HEK293T (cell line): ENCODE measurements at regions of chr2 and their contacts with region 1.

Region 1: DNA sequence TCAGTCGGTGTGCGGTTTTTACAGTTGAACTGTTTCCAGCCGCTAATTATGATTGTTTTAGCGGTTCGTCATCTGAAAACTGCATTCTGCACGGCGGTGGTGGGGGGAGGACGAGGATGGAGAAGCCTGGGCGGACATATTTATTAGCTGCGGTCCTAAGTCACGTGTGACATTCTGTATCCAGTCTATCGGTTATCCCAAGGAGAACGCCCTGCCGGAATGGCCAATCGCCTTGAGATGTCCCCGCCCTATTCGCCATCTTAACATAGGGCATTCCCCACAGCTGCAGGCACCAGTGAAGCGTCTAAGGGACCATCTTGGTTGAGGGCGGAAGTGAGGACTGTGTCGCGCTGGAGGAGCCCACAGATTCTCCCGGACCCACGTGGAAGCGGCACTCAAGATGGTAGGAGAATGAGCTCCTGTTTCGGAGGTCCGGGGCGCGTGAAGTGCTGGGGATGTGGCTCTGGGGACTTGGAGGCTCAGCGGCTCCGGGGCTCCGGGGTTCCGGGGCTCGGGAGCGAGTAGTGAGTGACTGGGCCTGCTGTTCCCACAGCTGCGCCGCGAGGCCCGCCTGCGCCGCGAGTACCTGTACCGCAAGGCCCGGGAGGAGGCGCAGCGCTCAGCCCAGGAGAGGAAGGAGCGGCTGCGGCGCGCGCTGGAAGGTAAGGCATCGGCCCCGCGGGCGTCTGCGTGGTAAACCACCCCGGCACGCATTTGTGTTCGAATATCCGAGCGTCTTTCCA is at the start of gene IMP4:
- DNase-seq: peak; percentile 87

Region 2: DNA sequence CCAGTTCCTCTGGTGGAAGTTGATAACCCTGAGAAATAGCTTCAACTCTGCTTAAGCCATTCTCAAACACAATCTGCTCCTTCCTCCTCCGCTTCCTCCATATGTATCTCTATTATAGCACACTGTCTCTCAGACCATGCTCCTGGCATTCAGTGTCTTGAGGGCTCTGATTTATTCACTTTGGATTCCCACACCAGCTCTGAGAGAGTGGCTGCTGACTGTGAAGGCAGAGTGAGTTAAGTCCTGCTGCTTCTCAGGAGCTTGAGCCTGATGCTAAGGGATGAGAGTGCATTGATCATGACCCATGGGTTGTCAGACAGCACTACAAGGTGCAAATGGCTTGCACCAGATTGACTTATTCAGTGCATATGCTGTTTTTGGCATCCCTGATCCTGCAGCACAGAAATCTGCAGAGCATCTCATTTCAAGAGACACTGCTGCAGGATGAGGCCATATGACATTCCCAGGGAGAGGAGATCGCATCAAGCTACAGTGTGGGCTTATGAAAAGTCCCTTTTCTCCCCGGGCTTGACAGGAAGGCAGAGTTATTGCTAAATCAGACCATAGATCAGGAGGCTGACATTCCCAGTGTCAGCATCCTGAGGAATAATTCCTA is 863.7 kb before region 1 on chr2:
- CTCF ChIA-PET with region 1: no interaction called
- POLR2A ChIA-PET with region 1: no interaction called
- DNase-seq: no peak

Region 3: DNA sequence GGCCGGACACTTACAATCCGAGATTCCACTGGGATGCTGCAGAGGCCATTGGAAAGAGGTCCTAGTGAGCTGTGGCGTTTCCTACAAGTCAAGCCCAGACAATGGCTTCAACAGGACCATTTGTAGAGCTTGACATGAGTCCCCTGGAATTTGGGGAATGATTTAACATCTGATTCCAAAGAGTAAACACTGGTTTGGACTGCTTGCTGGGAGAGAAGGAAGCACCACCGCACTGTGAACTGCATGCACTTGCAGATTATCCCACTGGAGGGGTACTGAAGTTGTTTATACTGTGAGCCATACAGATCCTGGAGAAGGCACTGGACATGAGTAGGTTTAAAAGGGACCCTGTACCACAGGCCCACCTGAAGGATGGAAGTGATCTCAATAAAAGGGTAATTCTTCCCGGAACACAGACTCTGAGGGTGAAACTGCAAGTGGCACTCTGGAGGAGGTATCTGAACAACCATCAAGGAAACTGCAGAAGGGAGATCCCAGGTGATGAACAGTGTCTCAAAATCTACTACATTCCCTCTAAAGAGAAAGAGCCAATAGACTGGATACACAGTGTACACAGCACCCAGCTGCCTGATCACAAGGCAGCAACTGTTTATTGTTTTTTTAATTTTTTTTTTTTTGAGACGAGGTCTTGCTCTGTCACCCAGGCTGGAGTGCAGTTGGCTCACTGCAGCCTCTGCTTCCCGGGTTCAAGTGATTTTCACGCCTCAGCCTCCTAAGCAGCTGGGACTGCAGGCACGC is 367.5 kb before region 1 on chr2:
- CTCF ChIA-PET with region 1: no interaction called
- POLR2A ChIA-PET with region 1: no interaction called
- DNase-seq: no peak

Region 4: GRCh38 chr2:130181325-130181879 is 161.3 kb before region 1 on chr2 and contains the start of gene SMPD4:
- CTCF ChIA-PET with region 1: no interaction called
- POLR2A ChIA-PET with region 1: interaction called, 17 read pairs
- DNase-seq: peak; percentile 85

Region 5: GRCh38 chr2:130332271-130333073 is 10.2 kb before region 1 on chr2:
- CTCF ChIA-PET with region 1: interaction called, 12 read pairs
- POLR2A ChIA-PET with region 1: interaction called, 6 read pairs
- DNase-seq: peak; percentile 78

Region 6: GRCh38 chr2:130355578-130356431 is 13.1 kb after region 1 on chr2 and contains the start of gene PTPN18:
- CTCF ChIA-PET with region 1: interaction called, 4 read pairs
- POLR2A ChIA-PET with region 1: interaction called, 60 read pairs
- DNase-seq: peak; percentile 80

Region 7: GRCh38 chr2:130372055-130372832 is 29.5 kb after region 1 on chr2:
- CTCF ChIA-PET with region 1: interaction called, 3 read pairs
- POLR2A ChIA-PET with region 1: interaction called, 11 read pairs
- DNase-seq: peak; percentile 91

Region 8: GRCh38 chr2:130391058-130391871 is 48.6 kb after region 1 on chr2:
- CTCF ChIA-PET with region 1: no interaction called
- POLR2A ChIA-PET with region 1: interaction called, 12 read pairs
- DNase-seq: peak; percentile 74

Region 9: GRCh38 chr2:130920415-130921163 is 577.9 kb after region 1 on chr2:
- CTCF ChIA-PET with region 1: no interaction called
- POLR2A ChIA-PET with region 1: no interaction called
- DNase-seq: peak; percentile 78